ENCODE measurements at regions of chr17 and their contacts with region 1.

Region 1: DNA sequence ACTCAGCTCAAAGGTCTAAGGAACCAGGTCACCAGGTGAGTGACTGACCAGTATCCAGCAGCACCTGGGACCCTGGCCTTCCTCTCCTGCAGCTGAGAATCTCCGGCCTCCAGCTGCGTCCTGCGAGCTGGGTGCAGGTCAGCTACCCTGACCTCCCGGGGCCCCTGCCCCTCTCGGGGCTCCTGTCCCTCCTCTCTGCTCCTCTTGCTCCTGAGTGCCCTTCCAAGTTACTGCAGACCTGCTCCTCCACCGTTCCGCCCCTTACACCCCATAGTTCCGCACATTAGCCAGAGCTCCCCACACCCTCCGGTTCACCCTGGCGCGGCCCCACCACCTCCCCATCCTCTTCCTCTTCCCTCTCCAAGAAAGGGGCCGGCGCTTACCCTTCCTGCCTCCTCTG is 10.6 kb downstream of the FOXJ1 start:
- DNase-seq: no peak
- ATAC-seq: no peak
- H3K4me3 ChIP-seq: no peak overlapping the region
- H3K4me3 Mint-ChIP-seq: no peak overlapping the region
- H3K27ac ChIP-seq: no peak overlapping the region
- H3K27ac Mint-ChIP-seq: no peak overlapping the region
- H3K4me1 ChIP-seq: peaks cover 6 to 22% of the 10 kb centered on the region in 2 experiments
- H3K4me1 Mint-ChIP-seq: peaks cover 30 to 43% (median 30%) of the 10 kb centered on the region in 3 donors
- H3K27me3 ChIP-seq: no peaks in the 10 kb centered on the region
- H3K27me3 Mint-ChIP-seq: no peaks in the 10 kb centered on the region

Region 2: DNA sequence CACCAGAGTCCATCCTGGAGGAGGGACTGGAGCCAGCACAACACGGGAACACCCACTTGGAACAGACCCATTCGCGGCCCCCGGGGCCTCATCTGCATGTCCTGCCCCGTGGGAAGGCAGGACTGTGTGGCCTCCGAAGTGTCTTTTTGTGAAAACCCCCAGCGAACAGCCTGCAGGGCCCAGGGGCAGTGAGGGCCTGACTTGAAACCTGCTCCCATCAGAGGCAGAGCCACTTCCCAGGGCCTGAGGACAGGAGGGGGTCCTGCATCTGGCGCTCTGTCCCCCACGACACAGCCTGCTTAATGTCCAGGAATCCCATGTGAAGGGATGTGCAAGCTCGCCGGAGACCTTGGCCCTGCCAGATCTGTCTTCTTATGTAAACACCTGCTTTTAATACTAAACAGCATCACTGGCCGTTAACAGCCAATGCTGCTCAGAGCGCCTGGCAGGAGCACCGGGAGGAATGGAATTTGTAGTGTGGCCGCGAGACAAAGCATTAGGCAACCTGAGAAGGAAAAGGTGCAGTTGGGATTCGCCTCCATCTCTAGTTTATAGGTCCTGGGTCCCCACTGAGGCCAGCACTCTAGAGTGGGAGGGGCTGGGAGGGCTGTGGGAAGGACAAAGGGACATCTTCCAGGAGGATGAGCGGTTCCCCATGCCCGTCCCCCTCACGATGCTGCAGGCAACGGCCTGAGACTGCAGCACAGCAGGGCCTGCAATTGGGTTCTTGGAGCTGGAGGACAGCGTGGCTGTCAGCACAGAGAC is 93.8 kb before region 1 on chr17:
- CTCF ChIA-PET with region 1: no interaction called
- POLR2A ChIA-PET with region 1: no interaction called
- DNase-seq: no peak
- ATAC-seq: peak in 1 of 4 experiments; percentile 28
- H3K4me3 ChIP-seq: no peak overlapping the region
- H3K4me3 Mint-ChIP-seq: no peak overlapping the region
- H3K27ac ChIP-seq: no peak overlapping the region
- H3K27ac Mint-ChIP-seq: peak overlapping the region in 1 of 2 donors; percentile 1
- H3K4me1 ChIP-seq: peaks cover 0 to 3% of the 10 kb centered on the region in 2 experiments
- H3K4me1 Mint-ChIP-seq: peaks cover 2 to 14% (median 5%) of the 10 kb centered on the region in 3 donors
- H3K27me3 ChIP-seq: no peaks in the 10 kb centered on the region
- H3K27me3 Mint-ChIP-seq: no peaks in the 10 kb centered on the region

Region 3: DNA sequence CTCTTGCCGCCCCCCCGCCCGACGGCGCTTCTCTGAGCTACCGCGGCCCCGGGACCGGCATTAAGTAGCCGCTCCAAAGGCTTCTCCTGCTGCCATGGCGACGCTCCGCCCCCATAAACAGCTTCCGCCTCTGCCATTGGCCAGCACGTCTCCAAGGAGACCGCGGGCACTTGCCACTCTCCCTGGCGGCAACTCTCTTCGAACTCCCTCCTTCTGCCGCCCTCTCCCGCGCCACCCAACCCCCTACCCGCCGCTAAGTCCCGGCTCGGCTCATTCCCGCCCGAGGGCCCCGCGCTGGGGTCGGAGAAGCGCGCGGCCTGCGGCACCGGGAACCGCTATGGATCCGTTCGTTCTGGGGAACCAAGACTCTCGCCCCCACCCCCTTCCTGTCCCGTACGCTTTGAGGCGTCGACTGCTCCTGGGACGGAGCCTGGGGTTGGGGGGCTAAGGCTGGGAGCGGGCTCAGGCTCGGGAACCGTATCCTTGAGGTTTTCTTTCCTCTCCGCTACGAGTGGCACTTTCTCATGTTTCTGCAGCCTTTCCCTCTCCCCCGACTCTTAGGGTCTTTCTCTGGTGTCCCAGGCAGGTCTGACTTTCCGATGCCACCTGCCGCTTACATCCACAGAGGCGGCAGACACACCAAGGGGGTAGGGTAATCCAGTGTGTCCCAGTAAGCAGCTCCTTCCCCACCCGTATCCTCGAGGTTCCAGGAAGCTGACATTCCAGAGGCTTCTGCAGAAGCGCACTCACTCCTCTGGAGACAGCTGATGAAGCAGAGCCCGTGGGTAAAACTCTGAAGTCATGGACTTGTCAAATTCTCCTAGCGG is 11.0 kb after region 1 on chr17 and contains the start of gene FOXJ1:
- CTCF ChIA-PET with region 1: no interaction called
- POLR2A ChIA-PET with region 1: no interaction called
- DNase-seq: peak; percentile 79 to 96 (median 88)
- ATAC-seq: peak; percentile 63 to 81 (median 69)
- H3K4me3 ChIP-seq: peak within 1 kb of the TSS; percentile 49 to 55
- H3K4me3 Mint-ChIP-seq: peak within 1 kb of the TSS; percentile 74 to 77 (median 76)
- H3K27ac ChIP-seq: no peak within 1 kb of the TSS
- H3K27ac Mint-ChIP-seq: peak within 1 kb of the TSS; percentile 83 to 96
- H3K4me1 ChIP-seq: peaks cover 45 to 75% of the 10 kb centered on the region in 2 experiments
- H3K4me1 Mint-ChIP-seq: peaks cover 55 to 61% (median 60%) of the 10 kb centered on the region in 3 donors
- H3K27me3 ChIP-seq: peaks cover 2 to 27% of the 10 kb centered on the region in 2 experiments
- H3K27me3 Mint-ChIP-seq: peaks cover 0 to 7% of the 10 kb centered on the region in 2 donors
- total RNA-seq, gene FOXJ1: 0.99 to 3.0 (median 1.7) TPM

Region 4: GRCh38 chr17:76297436-76297835 is 167.0 kb after region 1 on chr17:
- CTCF ChIA-PET with region 1: interaction called in 1 of 2 experiments, 10 read pairs
- POLR2A ChIA-PET with region 1: no interaction called
- DNase-seq: no peak
- ATAC-seq: no peak
- H3K4me3 ChIP-seq: no peak overlapping the region
- H3K4me3 Mint-ChIP-seq: no peak overlapping the region
- H3K27ac ChIP-seq: no peak overlapping the region
- H3K27ac Mint-ChIP-seq: no peak overlapping the region
- H3K4me1 ChIP-seq: no peaks in the 10 kb centered on the region
- H3K4me1 Mint-ChIP-seq: peaks cover 0 to 3% (median 2%) of the 10 kb centered on the region in 3 donors
- H3K27me3 ChIP-seq: no peaks in the 10 kb centered on the region
- H3K27me3 Mint-ChIP-seq: no peaks in the 10 kb centered on the region